ENCODE measurements at regions of chr7 and their contacts with region 1.

Region 1: GRCh38 chr7:100456558-100456957 is 7.5 kb downstream of the SPACDR start:
- DNase-seq: peak; percentile 47
- ATAC-seq: peak; percentile 73
- H3K4me3 Mint-ChIP-seq: no peak overlapping the region
- H3K27ac Mint-ChIP-seq: no peak overlapping the region
- H3K4me1 Mint-ChIP-seq: peaks cover 10% of the 10 kb centered on the region
- H3K27me3 Mint-ChIP-seq: no peaks in the 10 kb centered on the region; the same call in 1 of the 2 replicates
- CTCF ChIP-seq: no peak

Region 2: DNA sequence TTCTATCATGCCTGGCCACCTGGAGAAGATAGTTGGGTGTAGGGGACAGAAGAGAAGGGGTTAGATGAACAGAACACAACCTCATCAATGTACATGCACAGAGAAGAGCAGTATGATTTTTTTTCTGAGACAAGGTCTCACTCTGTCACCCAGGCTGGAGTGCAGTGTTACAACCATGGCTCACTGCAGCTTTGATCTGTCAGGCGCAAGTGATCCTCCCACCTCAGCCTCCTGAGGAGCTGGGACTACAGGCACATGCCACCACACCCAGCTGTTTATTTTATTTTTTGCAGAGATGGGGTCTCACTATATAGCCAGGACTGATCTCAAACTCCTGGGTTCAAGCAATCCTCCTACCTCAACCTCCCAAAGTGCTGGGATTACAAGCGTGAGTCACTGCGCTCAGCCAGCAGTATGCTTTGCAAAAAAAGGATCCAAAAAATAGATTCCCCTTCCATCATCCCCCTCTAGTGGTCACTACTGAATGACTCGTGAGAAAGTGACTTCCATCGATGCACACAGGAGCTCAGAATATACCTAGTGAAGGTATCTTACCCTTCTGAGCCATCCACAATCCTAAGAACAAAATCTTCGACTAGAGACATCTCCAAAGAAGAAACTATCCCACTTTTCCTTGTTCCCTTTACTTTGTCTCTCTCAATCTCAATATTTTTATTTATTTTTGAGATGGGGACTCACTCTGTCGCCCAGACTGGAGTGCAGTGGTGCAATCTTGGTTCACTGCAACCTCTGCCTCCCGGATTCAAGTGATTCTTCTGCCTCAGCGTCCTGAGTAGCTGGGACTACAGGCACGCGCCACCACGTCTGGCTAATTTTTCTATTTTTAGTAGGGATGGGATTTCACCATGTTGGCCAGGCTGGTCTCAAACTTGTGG is 49.0 kb before region 1 on chr7:
- CTCF ChIA-PET with region 1: interaction called, 18 read pairs
- POLR2A ChIA-PET with region 1: interaction called, 4 read pairs
- DNase-seq: no peak
- ATAC-seq: peak; percentile 92
- H3K4me3 Mint-ChIP-seq: no peak overlapping the region
- H3K27ac Mint-ChIP-seq: no peak overlapping the region
- H3K4me1 Mint-ChIP-seq: no peaks in the 10 kb centered on the region
- H3K27me3 Mint-ChIP-seq: peaks cover 19% of the 10 kb centered on the region
- CTCF ChIP-seq: no peak; the same call in 1 of the 2 replicates

Region 3: DNA sequence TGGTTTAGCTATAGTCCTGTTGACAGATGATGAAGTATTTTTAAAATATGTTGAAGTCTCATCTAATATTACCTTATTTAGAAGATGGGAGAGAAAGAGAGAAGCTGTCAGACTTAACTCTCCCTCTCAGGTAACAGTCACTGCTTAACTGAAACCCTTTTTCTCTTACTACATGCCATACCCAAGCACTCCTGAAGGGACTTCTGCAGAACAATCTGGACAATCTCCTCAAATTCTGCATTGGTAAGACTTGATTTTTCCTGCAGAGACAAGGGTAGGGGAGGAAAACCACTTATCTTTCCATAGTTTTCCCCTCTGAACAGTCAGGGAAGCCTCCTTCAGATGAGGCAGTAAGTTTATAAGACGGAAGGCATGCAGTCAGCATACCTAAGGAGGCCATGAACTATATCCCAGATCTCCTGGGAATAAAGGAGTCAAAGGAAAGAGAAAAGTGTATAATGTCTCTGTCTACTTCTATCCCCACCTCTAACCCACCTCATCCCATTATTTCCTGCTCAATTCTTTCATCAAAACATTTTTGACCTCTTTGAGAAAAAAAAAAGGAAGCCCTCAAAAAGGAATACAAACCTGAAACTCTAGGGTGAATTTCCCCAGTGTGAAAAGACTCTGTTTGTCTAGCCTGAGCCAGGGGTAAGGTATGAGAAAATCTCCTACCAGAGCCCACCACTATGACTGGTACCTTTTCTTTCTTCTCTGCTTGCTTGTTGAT is 37.5 kb before region 1 on chr7:
- CTCF ChIA-PET with region 1: no interaction called
- POLR2A ChIA-PET with region 1: no interaction called
- DNase-seq: no peak
- ATAC-seq: no peak; the same call in 1 of the 2 replicates
- H3K4me3 Mint-ChIP-seq: no peak overlapping the region
- H3K27ac Mint-ChIP-seq: no peak overlapping the region
- H3K4me1 Mint-ChIP-seq: no peaks in the 10 kb centered on the region
- H3K27me3 Mint-ChIP-seq: peaks cover 6% of the 10 kb centered on the region
- CTCF ChIP-seq: no peak

Region 4: GRCh38 chr7:100435401-100436304 is 20.9 kb before region 1 on chr7:
- CTCF ChIA-PET with region 1: interaction called, 20 read pairs
- POLR2A ChIA-PET with region 1: no interaction called
- DNase-seq: peak; percentile 47
- ATAC-seq: peak; percentile 17
- H3K4me3 Mint-ChIP-seq: peak overlapping the region; percentile 89
- H3K27ac Mint-ChIP-seq: peak overlapping the region; percentile 58
- H3K4me1 Mint-ChIP-seq: peaks cover 36% of the 10 kb centered on the region
- H3K27me3 Mint-ChIP-seq: no peaks in the 10 kb centered on the region
- CTCF ChIP-seq: no peak

Region 5: GRCh38 chr7:100469227-100470044 is 12.9 kb after region 1 on chr7:
- CTCF ChIA-PET with region 1: interaction called, 45 read pairs
- POLR2A ChIA-PET with region 1: no interaction called
- DNase-seq: peak; percentile 95
- ATAC-seq: peak; percentile 85
- H3K4me3 Mint-ChIP-seq: no peak overlapping the region
- H3K27ac Mint-ChIP-seq: no peak overlapping the region
- H3K4me1 Mint-ChIP-seq: peaks cover 13% of the 10 kb centered on the region; the same call in 1 of the 2 replicates
- H3K27me3 Mint-ChIP-seq: no peaks in the 10 kb centered on the region
- CTCF ChIP-seq: peak; percentile 97

Region 6: GRCh38 chr7:100586266-100587025 is 129.9 kb after region 1 on chr7 and contains the start of gene FBXO24:
- CTCF ChIA-PET with region 1: interaction called, 11 read pairs
- POLR2A ChIA-PET with region 1: interaction called, 5 read pairs
- DNase-seq: peak; percentile 99
- ATAC-seq: peak; percentile 85
- H3K4me3 Mint-ChIP-seq: peak within 1 kb of the TSS; percentile 99
- H3K27ac Mint-ChIP-seq: peak within 1 kb of the TSS; percentile 100
- H3K4me1 Mint-ChIP-seq: peaks cover 42% of the 10 kb centered on the region
- H3K27me3 Mint-ChIP-seq: peaks cover 30% of the 10 kb centered on the region
- CTCF ChIP-seq: no peak
- total RNA-seq, gene FBXO24: 0.70 to 1.3 TPM (median 0.94 TPM) in 3 replicates

Measured in WTC11 (cell line).